Psoas muscle (tissue), 8 donors: ENCODE measurements at regions of chr13 and their contacts with region 1.

Region 1: GRCh38 chr13:25001476-25002206 is 94.3 kb upstream of the PABPC3 start:
- DNase-seq: no peak
- ATAC-seq: no peak
- H3K4me3 ChIP-seq: no peak overlapping the region
- H3K27ac ChIP-seq: no peak overlapping the region
- H3K4me1 ChIP-seq: no peaks in the 10 kb centered on the region
- H3K27me3 ChIP-seq: peaks cover 0 to 4% (median 3%) of the 10 kb centered on the region in 3 donors
- CTCF ChIP-seq: no peak

Region 2: GRCh38 chr13:25059958-25060357 is 58.3 kb after region 1 on chr13:
- intact Hi-C with region 1: no loop called
- DNase-seq: no peak
- ATAC-seq: no peak
- H3K4me3 ChIP-seq: no peak overlapping the region
- H3K27ac ChIP-seq: no peak overlapping the region
- H3K4me1 ChIP-seq: no peaks in the 10 kb centered on the region
- H3K27me3 ChIP-seq: no peaks in the 10 kb centered on the region
- CTCF ChIP-seq: no peak

Region 3: GRCh38 chr13:25080773-25081172 is 79.1 kb after region 1 on chr13:
- intact Hi-C with region 1: no loop called
- DNase-seq: no peak
- ATAC-seq: no peak
- H3K4me3 ChIP-seq: no peak overlapping the region
- H3K27ac ChIP-seq: no peak overlapping the region
- H3K4me1 ChIP-seq: no peaks in the 10 kb centered on the region
- H3K27me3 ChIP-seq: peaks cover 0 to 3% (median 0%) of the 10 kb centered on the region in 3 donors
- CTCF ChIP-seq: no peak

Region 4: GRCh38 chr13:25114220-25114619 is 112.6 kb after region 1 on chr13:
- intact Hi-C with region 1: loop called (anchors 5 to 10 kb)
- DNase-seq: peak; percentile 43 to 62
- ATAC-seq: peak; percentile 53 to 79 (median 73)
- H3K4me3 ChIP-seq: no peak overlapping the region
- H3K27ac ChIP-seq: no peak overlapping the region
- H3K4me1 ChIP-seq: no peaks in the 10 kb centered on the region
- H3K27me3 ChIP-seq: peaks cover 0 to 3% (median 0%) of the 10 kb centered on the region in 3 donors
- CTCF ChIP-seq: peak; percentile 58

Region 5: GRCh38 chr13:26074706-26075105 is 1073.1 kb after region 1 on chr13:
- intact Hi-C with region 1: loop called in 1 of 2 experiments (anchors 10 kb)
- DNase-seq: no peak
- ATAC-seq: no peak
- H3K4me3 ChIP-seq: no peak overlapping the region
- H3K27ac ChIP-seq: no peak overlapping the region
- H3K4me1 ChIP-seq: no peaks in the 10 kb centered on the region
- H3K27me3 ChIP-seq: peaks cover 0 to 2% (median 0%) of the 10 kb centered on the region in 3 donors
- CTCF ChIP-seq: no peak